ENCODE measurements at regions of chr11 and their contacts with region 1.

Region 1: DNA sequence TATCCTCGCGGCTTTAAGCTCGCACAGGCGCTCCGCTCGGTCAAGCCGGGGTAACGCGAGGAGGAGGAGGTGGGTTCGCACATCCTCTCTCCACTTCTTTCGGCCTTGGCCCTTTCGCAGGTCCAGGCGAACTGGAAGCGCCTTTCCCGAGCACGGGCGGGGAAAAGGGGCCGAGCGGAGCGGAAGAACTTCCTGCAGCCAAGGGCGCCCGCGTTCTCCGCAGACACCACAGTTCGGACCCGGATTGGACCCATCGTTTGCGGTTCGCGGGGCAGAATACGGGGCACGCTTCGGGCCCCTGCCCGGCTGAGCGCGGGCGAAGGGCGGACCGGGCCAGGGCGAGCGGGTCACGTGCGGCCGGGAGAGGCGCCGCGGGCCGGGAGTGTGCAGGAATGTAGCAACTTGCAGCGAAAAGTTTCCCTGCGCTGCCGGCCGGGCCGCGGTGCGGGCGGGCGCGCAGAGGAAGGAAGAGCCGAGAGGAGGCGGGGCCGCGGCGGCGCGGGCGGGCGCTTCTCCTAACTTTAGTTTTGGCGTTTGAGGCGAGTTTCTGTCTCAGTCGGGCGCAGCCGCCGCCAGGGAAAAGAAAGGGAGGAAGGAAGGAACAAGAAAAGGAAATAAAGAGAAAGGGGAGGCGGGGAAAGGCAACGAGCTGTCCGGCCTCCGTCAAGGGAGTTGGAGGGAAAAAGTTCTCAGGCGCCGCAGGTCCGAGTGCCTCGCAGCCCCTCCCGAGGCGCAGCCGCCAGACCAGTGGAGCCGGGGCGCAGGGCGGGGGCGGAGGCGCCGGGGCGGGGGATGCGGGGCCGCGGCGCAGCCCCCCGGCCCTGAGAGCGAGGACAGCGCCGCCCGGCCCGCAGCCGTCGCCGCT is at the start of gene YAP1:
- DNase-seq: peak; percentile 91
- ATAC-seq: peak; percentile 78
- H3K4me3 ChIP-seq: peak within 1 kb of the TSS; percentile 89
- H3K27ac ChIP-seq: peak within 1 kb of the TSS; percentile 100
- H3K4me1 ChIP-seq: peaks cover 7% of the 10 kb centered on the region
- H3K27me3 ChIP-seq: no peaks in the 10 kb centered on the region
- CTCF ChIP-seq: no peak
- POLR2A ChIP-seq: peak; percentile 61; the same call in 1 of the 2 replicates
- RAD21 ChIP-seq: no peak
- total RNA-seq, gene YAP1: 207 and 251 TPM in 2 replicates

Region 2: DNA sequence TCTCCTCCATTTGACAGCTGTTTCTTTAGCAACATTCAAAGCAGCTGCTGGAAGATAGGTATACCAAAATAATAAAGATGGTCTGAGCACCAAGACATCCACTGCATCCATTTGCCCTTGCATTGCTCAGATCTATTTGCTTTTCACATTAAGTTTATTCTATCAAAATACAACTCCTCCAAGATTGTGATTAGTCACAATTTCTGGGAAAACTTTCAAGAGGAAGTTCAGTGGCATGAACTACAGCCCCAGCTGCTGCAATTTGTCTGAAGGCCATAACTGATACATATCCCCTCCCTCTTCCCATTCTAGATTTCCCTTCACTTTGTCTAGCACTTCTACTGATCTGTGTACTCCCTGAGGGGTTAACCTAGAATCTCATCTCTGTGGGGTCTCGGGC is 312.8 kb before region 1 on chr11:
- CTCF ChIA-PET with region 1: no interaction called
- POLR2A ChIA-PET with region 1: no interaction called
- dilution Hi-C with region 1: no loop called
- in situ Hi-C with region 1: no loop called
- intact Hi-C with region 1: no loop called
- DNase-seq: peak; percentile 70
- ATAC-seq: peak; percentile 85
- H3K4me3 ChIP-seq: no peak overlapping the region
- H3K27ac ChIP-seq: peak overlapping the region; percentile 72; the same call in 1 of the 2 replicates
- H3K4me1 ChIP-seq: peaks cover 7% of the 10 kb centered on the region; the same call in 1 of the 2 replicates
- H3K27me3 ChIP-seq: no peaks in the 10 kb centered on the region
- CTCF ChIP-seq: no peak
- POLR2A ChIP-seq: no peak
- RAD21 ChIP-seq: no peak

Region 3: GRCh38 chr11:102171101-102171500 is 61.0 kb after region 1 on chr11:
- CTCF ChIA-PET with region 1: no interaction called
- POLR2A ChIA-PET with region 1: interaction called, 6 read pairs
- dilution Hi-C with region 1: no loop called
- in situ Hi-C with region 1: no loop called
- intact Hi-C with region 1: loop called (anchors 5 kb)
- DNase-seq: peak; percentile 85
- ATAC-seq: peak; percentile 65
- H3K4me3 ChIP-seq: no peak overlapping the region
- H3K27ac ChIP-seq: peak overlapping the region; percentile 97
- H3K4me1 ChIP-seq: peaks cover 18% of the 10 kb centered on the region
- H3K27me3 ChIP-seq: no peaks in the 10 kb centered on the region
- CTCF ChIP-seq: no peak
- POLR2A ChIP-seq: no peak
- RAD21 ChIP-seq: no peak

Region 4: GRCh38 chr11:102187416-102188151 is 77.5 kb after region 1 on chr11:
- CTCF ChIA-PET with region 1: no interaction called
- POLR2A ChIA-PET with region 1: no interaction called
- dilution Hi-C with region 1: no loop called
- in situ Hi-C with region 1: no loop called
- intact Hi-C with region 1: loop called (anchors 5 kb)
- DNase-seq: peak; percentile 35
- ATAC-seq: no peak
- H3K4me3 ChIP-seq: no peak overlapping the region
- H3K27ac ChIP-seq: peak overlapping the region; percentile 63
- H3K4me1 ChIP-seq: peaks cover 16% of the 10 kb centered on the region
- H3K27me3 ChIP-seq: no peaks in the 10 kb centered on the region
- CTCF ChIP-seq: no peak
- POLR2A ChIP-seq: no peak
- RAD21 ChIP-seq: no peak

Region 5: DNA sequence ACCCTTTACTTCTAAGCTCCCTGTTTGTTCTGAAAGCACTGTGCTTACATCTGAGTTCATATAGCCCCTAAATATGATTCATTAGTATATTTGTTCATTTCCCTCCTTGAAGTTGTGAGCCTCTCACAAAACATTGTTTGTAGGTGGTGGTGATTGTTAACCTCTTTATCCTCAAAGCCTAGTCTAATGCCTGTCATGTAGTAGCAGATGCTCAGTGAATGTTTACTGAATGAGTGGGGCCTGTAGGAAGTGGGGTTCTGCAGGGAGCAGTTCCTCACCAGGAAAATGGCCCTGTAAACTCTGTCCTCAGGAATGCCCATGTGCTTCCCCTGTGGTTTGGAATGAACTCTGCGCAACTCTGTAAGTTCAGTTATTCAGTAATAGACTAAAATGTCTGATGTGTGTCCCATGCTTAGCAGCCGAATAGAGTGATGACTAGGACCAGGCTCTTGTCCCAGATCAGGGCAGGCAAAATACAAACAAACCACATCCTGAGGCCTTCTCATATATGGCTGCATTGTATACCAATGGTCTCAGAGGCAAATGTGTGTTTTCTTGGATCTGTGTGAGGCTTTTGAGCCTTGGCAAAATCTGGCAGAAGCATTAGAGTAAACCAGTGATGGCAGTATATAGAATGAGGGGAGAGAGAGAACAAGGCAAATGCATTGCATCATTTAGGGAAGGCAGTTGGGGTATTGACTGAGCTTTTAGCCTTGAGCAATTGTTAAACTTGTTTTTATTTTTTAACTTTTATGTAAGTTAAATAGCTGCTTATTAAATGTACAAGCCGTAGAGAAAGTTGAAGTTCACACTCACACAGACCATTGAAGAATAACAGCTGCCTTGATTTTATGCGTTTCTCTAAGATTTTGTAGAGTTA is 115.8 kb after region 1 on chr11:
- CTCF ChIA-PET with region 1: no interaction called
- POLR2A ChIA-PET with region 1: interaction called, 3 read pairs
- dilution Hi-C with region 1: no loop called
- in situ Hi-C with region 1: no loop called
- intact Hi-C with region 1: loop called (anchors 2 kb)
- DNase-seq: peak; percentile 97
- ATAC-seq: peak; percentile 91
- H3K4me3 ChIP-seq: peak overlapping the region; percentile 11; the same call in 1 of the 2 replicates
- H3K27ac ChIP-seq: peak overlapping the region; percentile 42; the same call in 1 of the 2 replicates
- H3K4me1 ChIP-seq: peaks cover 18% of the 10 kb centered on the region
- H3K27me3 ChIP-seq: no peaks in the 10 kb centered on the region
- CTCF ChIP-seq: no peak
- POLR2A ChIP-seq: peak; percentile 50; the same call in 1 of the 2 replicates
- RAD21 ChIP-seq: peak; percentile 1; the same call in 1 of the 2 replicates

Region 6: DNA sequence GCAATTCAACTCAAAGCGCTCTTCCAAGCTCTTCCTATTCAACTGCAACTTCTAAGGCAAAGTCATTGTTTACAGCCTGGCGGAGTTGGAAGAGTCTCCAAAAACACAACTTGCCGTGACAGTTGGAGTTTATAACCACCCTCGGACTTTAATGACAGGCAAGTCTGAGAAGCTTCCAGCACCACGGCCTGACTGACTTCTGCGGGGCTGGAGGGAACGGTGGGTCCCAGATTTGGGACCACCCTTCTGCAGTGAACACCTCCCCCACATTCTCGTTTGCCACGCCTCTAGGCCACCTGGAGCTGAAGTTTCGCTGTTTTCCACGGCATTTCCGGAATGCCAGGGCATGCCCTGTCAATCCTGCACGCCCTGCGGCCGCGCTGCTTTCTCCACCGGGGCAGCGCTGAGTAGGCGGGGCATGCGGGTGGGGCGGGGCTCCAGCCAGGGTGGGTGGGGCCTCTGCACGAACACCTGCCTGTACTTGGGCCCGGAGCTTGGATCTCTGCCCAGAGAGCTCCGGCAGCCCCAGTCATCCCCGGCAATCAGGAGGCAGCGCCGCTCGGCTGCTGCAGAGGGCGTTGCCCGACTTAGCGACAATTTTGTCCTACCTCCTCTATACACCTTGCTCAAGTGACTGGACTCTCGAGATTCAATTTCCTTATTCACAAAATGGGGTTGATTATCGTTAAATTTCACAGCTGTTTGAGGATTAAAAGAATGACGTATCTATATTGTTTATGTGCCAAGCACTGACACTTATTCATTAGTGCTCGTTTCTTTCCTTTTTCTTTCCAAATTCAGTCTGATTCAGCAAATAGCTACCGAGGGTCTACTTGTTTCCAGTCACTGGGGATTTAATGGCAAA is 158.4 kb after region 1 on chr11:
- CTCF ChIA-PET with region 1: no interaction called
- POLR2A ChIA-PET with region 1: no interaction called
- dilution Hi-C with region 1: no loop called
- in situ Hi-C with region 1: no loop called
- intact Hi-C with region 1: no loop called
- DNase-seq: peak; percentile 55
- ATAC-seq: peak; percentile 81
- H3K4me3 ChIP-seq: peak overlapping the region; percentile 44
- H3K27ac ChIP-seq: peak overlapping the region; percentile 15
- H3K4me1 ChIP-seq: peaks cover 8% of the 10 kb centered on the region
- H3K27me3 ChIP-seq: no peaks in the 10 kb centered on the region
- CTCF ChIP-seq: peak; percentile 24; the same call in 1 of the 2 replicates
- POLR2A ChIP-seq: no peak
- RAD21 ChIP-seq: peak; percentile 29; the same call in 1 of the 2 replicates

Region 7: GRCh38 chr11:102279641-102280170 is 169.6 kb after region 1 on chr11:
- CTCF ChIA-PET with region 1: no interaction called
- POLR2A ChIA-PET with region 1: no interaction called
- dilution Hi-C with region 1: no loop called
- in situ Hi-C with region 1: no loop called
- intact Hi-C with region 1: loop called (anchors 1 kb)
- DNase-seq: peak; percentile 84
- ATAC-seq: peak; percentile 84
- H3K4me3 ChIP-seq: peak overlapping the region; percentile 35; the same call in 1 of the 2 replicates
- H3K27ac ChIP-seq: no peak overlapping the region
- H3K4me1 ChIP-seq: peaks cover 6% of the 10 kb centered on the region
- H3K27me3 ChIP-seq: no peaks in the 10 kb centered on the region
- CTCF ChIP-seq: peak; percentile 33
- POLR2A ChIP-seq: no peak
- RAD21 ChIP-seq: peak; percentile 39

Region 8: DNA sequence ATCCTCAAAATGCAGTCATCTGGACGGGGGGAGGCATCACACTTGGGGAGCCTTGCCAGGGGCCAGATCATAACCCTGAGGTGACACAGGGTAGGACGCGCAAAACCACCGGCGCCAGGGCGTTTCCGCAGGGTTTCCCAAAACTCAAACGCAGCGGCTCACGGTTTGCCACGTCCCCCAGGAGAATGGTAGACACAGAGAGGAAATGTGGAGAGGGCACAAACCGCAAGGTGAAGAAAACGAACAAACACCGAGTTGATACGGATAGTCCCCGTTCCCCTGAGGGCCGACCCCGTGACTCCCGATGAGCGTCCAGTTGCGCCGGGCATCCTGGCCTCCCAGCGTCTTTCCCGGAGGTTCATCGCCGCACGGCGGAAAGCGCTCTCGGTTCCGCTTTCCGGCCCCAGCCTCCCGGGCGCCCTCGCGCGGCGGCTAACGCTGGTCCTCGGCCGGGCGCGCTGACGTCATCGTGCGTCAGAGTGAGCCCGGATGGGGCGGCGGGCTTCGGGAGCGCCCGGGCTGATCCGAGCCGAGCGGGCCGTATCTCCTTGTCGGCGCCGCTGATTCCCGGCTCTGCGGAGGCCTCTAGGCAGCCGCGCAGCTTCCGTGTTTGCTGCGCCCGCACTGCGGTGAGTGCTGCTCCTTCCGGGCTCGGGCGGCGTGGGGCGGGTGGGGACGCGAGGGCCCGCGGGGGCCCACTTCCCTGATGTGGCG is 236.8 kb after region 1 on chr11 and contains the start of gene BIRC2:
- CTCF ChIA-PET with region 1: no interaction called
- POLR2A ChIA-PET with region 1: no interaction called
- dilution Hi-C with region 1: no loop called
- in situ Hi-C with region 1: no loop called
- intact Hi-C with region 1: loop called (anchors 5 kb)
- DNase-seq: peak; percentile 89
- ATAC-seq: peak; percentile 91
- H3K4me3 ChIP-seq: peak within 1 kb of the TSS; percentile 81
- H3K27ac ChIP-seq: peak within 1 kb of the TSS; percentile 95
- H3K4me1 ChIP-seq: no peaks in the 10 kb centered on the region; the same call in 1 of the 2 replicates
- H3K27me3 ChIP-seq: no peaks in the 10 kb centered on the region
- CTCF ChIP-seq: peak; percentile 94
- POLR2A ChIP-seq: peak; percentile 84
- RAD21 ChIP-seq: peak; percentile 36
- total RNA-seq, gene BIRC2: 112 and 204 TPM in 2 replicates